Naive thymus-derived CD8-positive, alpha-beta T cell (primary cell): ENCODE measurements at regions of chr5 and their contacts with region 1.

Region 1: DNA sequence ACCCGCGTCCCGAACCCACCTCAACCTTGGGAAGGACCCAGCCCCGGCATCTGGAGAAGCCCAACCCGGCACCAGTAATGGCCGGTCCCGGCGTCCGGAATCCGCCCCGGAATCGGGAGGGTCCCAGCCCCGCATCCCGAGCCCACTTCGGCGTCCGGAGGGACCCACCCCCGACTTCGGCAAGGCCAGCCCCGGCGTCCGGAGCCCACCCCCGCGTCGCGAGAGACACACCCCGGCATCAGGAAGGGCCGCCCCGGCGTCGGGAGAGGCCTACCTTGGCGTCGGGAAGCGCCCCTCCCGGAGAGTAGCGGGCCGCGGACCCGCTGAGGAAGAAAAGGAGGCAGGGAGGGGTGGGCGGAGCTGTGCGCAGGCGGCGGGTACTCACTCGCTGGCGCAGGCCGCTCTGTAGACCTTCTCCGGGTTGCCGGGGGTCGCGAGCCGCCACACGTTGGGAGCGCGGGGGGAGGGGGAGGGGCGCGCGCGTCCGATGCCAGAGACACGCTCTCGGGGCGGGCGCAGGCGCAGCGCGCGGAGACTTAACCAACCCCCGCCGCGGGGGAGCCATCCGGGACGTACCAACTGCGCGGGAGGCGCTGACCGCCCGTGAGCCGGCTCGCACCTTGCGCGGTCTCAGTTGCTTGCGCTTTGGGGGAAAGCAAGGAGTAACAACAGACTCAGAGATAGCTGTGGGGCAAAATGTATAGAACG is at the start of gene UIMC1:
- DNase-seq: peak; percentile 83 to 94 (median 92)
- ATAC-seq: peak; percentile 80 to 81
- H3K4me3 Mint-ChIP-seq: peak within 1 kb of the TSS; percentile 91 to 96 (median 94)
- H3K27ac Mint-ChIP-seq: peak within 1 kb of the TSS; percentile 90 to 96 (median 94)
- H3K4me1 Mint-ChIP-seq: peaks cover 13 to 38% (median 35%) of the 10 kb centered on the region in 4 donors
- H3K27me3 Mint-ChIP-seq: no peaks in the 10 kb centered on the region
- polyA plus RNA-seq, gene UIMC1: 15.4 to 31.0 (median 16.6) TPM

Region 2: GRCh38 chr5:177022384-177023308 is 16.2 kb after region 1 on chr5 and contains the start of gene ZNF346:
- POLR2A ChIA-PET with region 1: interaction called, 33 read pairs
- DNase-seq: peak; percentile 88 to 97 (median 90)
- ATAC-seq: peak; percentile 97 to 98
- H3K4me3 Mint-ChIP-seq: peak within 1 kb of the TSS; percentile 94 to 99 (median 98)
- H3K27ac Mint-ChIP-seq: peak within 1 kb of the TSS; percentile 93 to 99 (median 98)
- H3K4me1 Mint-ChIP-seq: peaks cover 26 to 48% (median 43%) of the 10 kb centered on the region in 4 donors
- H3K27me3 Mint-ChIP-seq: no peaks in the 10 kb centered on the region
- polyA plus RNA-seq, gene ZNF346: 9.3 to 19.5 (median 11.4) TPM